Endothelial cell of umbilical vein (primary cell): ENCODE measurements at regions of chr1 and their contacts with region 1.

Region 1: GRCh38 chr1:211885747-211886522 is 55.4 kb upstream of the LPGAT1 start:
- DNase-seq: no peak
- H3K4me3 ChIP-seq: no peak overlapping the region
- H3K27ac ChIP-seq: no peak overlapping the region
- H3K4me1 ChIP-seq: no peaks in the 10 kb centered on the region
- H3K27me3 ChIP-seq: peaks cover 0 to 9% of the 10 kb centered on the region in 2 experiments
- CTCF ChIP-seq: no peak
- POLR2A ChIP-seq: no peak

Region 2: GRCh38 chr1:211918843-211919414 is 33.0 kb after region 1 on chr1:
- CTCF ChIA-PET with region 1: no interaction called
- POLR2A ChIA-PET with region 1: interaction called, 4 read pairs
- dilution Hi-C with region 1: no loop called
- intact Hi-C with region 1: loop called (anchors 1 kb)
- DNase-seq: no peak
- H3K4me3 ChIP-seq: no peak overlapping the region
- H3K27ac ChIP-seq: no peak overlapping the region
- H3K4me1 ChIP-seq: peaks cover 9% of the 10 kb centered on the region
- H3K27me3 ChIP-seq: no peaks in the 10 kb centered on the region
- CTCF ChIP-seq: no peak
- POLR2A ChIP-seq: no peak